HCT116 (cell line): ENCODE measurements at regions of chr1 and their contacts with region 1.

Region 1: GRCh38 chr1:226626577-226626956 is 78.0 kb downstream of the STUM start:
- DNase-seq: peak; percentile 51
- ATAC-seq: peak; percentile 95
- H3K4me3 ChIP-seq: no peak overlapping the region
- H3K27ac ChIP-seq: no peak overlapping the region
- H3K4me1 ChIP-seq: peaks cover 0 to 3% of the 10 kb centered on the region in 2 experiments; a peak in 1 of 4 replicates
- H3K27me3 ChIP-seq: 0 out of 2 replicates have a peak, but pooled peaks cover 3% of the 10 kb centered on the region
- CTCF ChIP-seq: peak; percentile 87 to 97 (median 93)
- POLR2A ChIP-seq: no peak
- RAD21 ChIP-seq: peak; percentile 88

Region 2: DNA sequence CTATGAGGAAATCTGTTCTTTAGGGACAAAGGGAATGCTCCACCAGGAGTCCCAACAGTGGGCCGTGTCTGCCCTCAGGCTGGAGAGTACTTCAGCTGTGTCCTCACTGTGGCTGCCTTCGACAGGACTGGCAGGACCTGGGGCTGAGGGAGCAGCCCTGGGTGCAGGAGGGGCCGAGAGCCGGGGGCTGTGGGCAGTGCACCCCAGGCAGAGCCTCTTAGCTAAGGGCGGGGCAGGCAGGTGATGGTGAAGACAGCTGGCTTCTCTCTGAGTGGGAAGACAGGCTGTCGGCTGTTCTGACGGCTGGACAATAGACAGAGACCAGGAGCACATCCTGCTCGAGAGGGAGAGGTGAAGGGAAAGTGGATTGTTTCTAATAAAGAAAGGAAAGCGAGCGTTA is 13.7 kb after region 1 on chr1:
- CTCF ChIA-PET with region 1: interaction called, 12 read pairs
- POLR2A ChIA-PET with region 1: no interaction called
- RAD21 ChIA-PET with region 1: no interaction called
- intact Hi-C with region 1: no loop called
- DNase-seq: no peak
- ATAC-seq: no peak
- H3K4me3 ChIP-seq: no peak overlapping the region
- H3K27ac ChIP-seq: no peak overlapping the region
- H3K4me1 ChIP-seq: peaks cover 26 to 37% of the 10 kb centered on the region in 2 experiments
- H3K27me3 ChIP-seq: no peaks in the 10 kb centered on the region
- CTCF ChIP-seq: no peak
- POLR2A ChIP-seq: no peak
- RAD21 ChIP-seq: no peak

Region 3: DNA sequence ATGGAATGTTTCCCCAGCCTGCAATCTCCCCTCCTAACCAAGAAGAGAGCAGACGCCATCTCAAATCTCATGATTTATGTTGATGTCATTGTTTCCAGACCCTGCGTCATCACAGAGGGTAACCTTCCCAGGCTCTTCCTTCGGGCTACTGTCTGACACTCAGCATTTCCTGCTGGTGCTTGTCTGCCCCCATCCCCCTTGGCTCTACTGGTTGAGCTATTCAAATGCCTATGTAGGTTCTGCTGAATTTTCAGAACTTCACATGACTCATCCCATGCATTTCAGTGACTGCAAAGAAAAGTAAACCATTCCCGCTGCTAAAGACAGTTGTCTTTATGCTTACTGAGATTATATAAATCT is 137.3 kb after region 1 on chr1:
- CTCF ChIA-PET with region 1: no interaction called
- POLR2A ChIA-PET with region 1: no interaction called
- RAD21 ChIA-PET with region 1: no interaction called
- intact Hi-C with region 1: no loop called
- DNase-seq: no peak
- ATAC-seq: no peak
- H3K4me3 ChIP-seq: no peak overlapping the region
- H3K27ac ChIP-seq: no peak overlapping the region
- H3K4me1 ChIP-seq: peaks cover 0 to 3% of the 10 kb centered on the region in 2 experiments; a peak in 1 of 4 replicates
- H3K27me3 ChIP-seq: no peaks in the 10 kb centered on the region
- CTCF ChIP-seq: no peak
- POLR2A ChIP-seq: no peak
- RAD21 ChIP-seq: no peak